Gastrocnemius medialis (tissue), 4 donors: ENCODE measurements at regions of chr3 and their contacts with region 1.

Region 1: DNA sequence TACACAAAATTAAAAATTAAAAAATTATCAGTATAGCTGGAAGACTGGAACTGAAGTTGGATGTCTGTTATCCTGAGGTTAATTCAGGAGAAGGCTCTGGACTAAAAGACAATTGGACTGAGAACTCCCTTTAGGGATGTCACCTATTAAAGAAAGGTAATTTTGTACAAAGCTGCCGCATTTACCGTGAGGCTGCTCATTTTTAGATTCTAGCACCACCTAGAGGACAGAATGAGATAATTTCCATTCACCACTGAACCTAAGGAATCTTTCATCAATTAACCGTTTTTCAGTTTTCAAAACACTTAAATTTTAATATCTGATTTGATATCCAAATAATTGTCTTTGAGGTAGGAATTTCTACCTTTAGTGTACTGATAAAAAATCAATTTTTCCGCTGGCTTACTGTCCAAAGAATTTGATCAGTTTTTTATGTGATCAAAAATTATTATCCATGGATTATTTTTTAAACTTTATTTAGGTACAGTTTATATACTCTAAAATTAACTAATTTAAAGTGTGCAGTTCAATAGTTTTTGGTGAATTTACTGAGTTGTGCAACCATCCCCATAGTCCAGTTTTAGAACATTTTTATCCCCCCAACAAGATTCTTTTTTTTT is 106.7 kb upstream of the TNIK start:
- DNase-seq: no peak
- ATAC-seq: peak; percentile 67 to 70
- H3K4me3 ChIP-seq: no peak overlapping the region
- H3K27ac ChIP-seq: no peak overlapping the region
- H3K4me1 ChIP-seq: peaks cover 10 to 18% of the 10 kb centered on the region in 2 donors
- H3K27me3 ChIP-seq: no peaks in the 10 kb centered on the region
- CTCF ChIP-seq: peak; percentile 62 to 81 (median 78)
- POLR2A ChIP-seq: no peak

Region 2: DNA sequence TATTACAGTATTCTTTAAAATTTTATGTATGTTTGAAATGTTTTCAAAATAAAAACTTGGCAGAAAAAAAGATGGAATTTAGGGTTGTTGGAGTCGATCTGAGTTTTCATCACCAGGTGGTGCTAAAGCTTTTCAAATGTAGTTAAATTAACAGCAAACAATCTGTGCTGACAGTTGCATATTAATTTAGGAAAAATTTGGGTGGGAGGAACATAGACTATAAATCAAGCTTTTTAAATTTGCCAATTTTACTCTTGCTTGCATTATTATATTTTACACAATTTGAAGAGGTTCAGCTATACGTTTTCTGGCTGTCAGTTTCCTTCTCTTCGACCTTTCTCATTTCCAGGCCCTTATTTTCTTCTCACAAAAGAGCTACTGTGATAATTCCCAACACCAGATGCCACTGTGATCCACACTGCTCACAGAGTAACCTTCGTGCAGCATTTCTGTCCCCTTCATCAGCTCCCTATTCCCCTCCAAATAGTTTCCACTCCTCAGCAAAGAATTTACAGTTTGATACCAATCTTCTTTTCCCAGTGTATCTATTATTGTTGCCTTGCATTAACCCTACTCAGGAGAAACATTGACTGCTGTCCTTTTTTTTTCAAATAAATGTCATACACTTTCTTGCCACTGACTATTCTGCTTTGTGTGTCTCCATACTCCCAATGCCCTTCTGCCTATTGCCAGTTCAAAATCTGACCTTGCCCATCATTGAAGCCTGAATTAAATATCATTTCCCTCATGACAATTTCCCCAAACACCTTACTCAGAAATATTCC is 605.1 kb before region 1 on chr3:
- in situ Hi-C with region 1: loop called (anchors 10 to 25 kb)
- intact Hi-C with region 1: loop called (anchors 5 kb)
- DNase-seq: no peak
- ATAC-seq: no peak
- H3K4me3 ChIP-seq: no peak overlapping the region
- H3K27ac ChIP-seq: no peak overlapping the region
- H3K4me1 ChIP-seq: no peaks in the 10 kb centered on the region
- H3K27me3 ChIP-seq: no peaks in the 10 kb centered on the region
- CTCF ChIP-seq: peak in 4 of 5 experiments; percentile 36 to 48 (median 43)
- POLR2A ChIP-seq: no peak

Region 3: DNA sequence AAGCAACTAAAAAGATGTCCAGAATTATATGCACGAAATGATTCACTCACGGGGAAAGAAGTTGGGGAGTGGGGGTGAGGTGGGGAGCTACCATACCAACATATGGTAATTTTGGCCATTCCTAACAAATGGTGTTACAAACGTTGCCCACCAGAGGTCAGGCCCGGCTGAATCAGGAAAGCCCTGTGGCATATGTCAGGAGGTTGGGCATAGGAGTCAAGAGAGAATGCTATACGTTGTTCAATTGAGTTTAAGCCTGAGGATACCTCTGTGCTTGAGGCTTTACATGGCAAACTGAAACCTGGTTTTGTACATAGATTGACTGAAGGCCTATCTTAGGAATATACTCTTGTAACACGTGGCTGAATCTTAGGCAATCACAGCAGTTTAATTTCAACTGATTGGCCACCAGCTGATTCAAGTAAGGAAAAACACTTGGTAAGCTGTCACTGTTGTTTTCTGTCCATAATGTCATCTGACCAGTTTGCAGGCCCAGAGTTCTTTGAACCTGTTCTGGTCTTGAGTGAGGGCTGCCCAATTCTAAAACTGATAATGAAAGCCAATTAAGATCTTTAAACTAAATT is 517.0 kb before region 1 on chr3:
- in situ Hi-C with region 1: loop called in 1 of 4 experiments (anchors 10 kb)
- intact Hi-C with region 1: loop called (anchors 2 kb)
- DNase-seq: no peak
- ATAC-seq: peak; percentile 56 to 58
- H3K4me3 ChIP-seq: no peak overlapping the region
- H3K27ac ChIP-seq: no peak overlapping the region
- H3K4me1 ChIP-seq: no peaks in the 10 kb centered on the region
- H3K27me3 ChIP-seq: no peaks in the 10 kb centered on the region
- CTCF ChIP-seq: peak in 4 of 5 experiments; percentile 29 to 58 (median 44)
- POLR2A ChIP-seq: no peak

Region 4: GRCh38 chr3:171162986-171163723 is 403.8 kb before region 1 on chr3:
- in situ Hi-C with region 1: loop called in 2 of 4 experiments (anchors 25 kb)
- intact Hi-C with region 1: no loop called
- DNase-seq: no peak
- ATAC-seq: no peak
- H3K4me3 ChIP-seq: no peak overlapping the region
- H3K27ac ChIP-seq: no peak overlapping the region
- H3K4me1 ChIP-seq: no peaks in the 10 kb centered on the region
- H3K27me3 ChIP-seq: no peaks in the 10 kb centered on the region
- CTCF ChIP-seq: peak in 3 of 5 experiments; percentile 32 to 48 (median 46)
- POLR2A ChIP-seq: no peak

Region 5: GRCh38 chr3:171187706-171188290 is 379.1 kb before region 1 on chr3:
- in situ Hi-C with region 1: loop called in 2 of 4 experiments (anchors 5 to 10 kb)
- intact Hi-C with region 1: loop called (anchors 2 kb)
- DNase-seq: no peak
- ATAC-seq: peak; percentile 82 to 88
- H3K4me3 ChIP-seq: no peak overlapping the region
- H3K27ac ChIP-seq: no peak overlapping the region
- H3K4me1 ChIP-seq: peaks cover 21 to 38% of the 10 kb centered on the region in 2 donors
- H3K27me3 ChIP-seq: no peaks in the 10 kb centered on the region
- CTCF ChIP-seq: peak; percentile 53 to 64 (median 63)
- POLR2A ChIP-seq: no peak

Region 6: DNA sequence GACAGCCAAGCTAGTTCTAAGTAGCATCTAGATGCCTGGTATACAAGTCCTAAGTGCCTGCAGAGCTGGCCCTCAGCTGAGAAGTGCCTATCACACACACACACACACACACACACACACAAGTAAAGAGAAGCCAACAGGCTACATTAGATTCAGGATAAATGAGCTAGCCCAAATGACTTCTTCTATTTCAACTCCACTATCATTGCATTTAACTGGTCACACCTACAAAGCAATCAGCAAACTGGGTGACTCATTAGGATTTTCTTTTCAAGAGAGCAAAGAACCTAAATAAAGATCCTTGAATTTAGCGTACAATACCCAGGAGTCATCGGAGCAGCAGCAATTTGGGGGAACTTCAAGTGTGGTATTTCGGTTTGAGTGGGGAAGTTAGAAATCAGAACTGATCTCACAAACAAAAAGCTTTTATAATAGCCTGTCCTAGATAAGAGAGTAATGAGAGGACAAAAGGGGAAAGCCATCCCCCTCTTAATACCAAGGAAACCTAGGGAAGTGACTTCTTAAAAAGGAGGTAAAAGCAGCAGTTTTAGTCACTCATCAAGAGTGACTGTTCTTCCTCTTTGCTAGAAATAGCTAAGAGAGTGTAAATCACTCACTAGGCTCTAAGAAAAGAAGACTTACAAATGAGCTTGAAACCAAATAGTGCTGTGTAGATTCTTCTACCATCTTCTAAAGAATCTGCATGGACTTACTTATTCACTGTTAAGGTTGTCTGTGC is 219.4 kb before region 1 on chr3:
- in situ Hi-C with region 1: no loop called
- intact Hi-C with region 1: loop called (anchors 10 kb)
- DNase-seq: no peak
- ATAC-seq: peak in 1 of 2 donors; percentile 15
- H3K4me3 ChIP-seq: no peak overlapping the region
- H3K27ac ChIP-seq: peak overlapping the region; percentile 16 to 40 (median 19)
- H3K4me1 ChIP-seq: peaks cover 47 to 51% of the 10 kb centered on the region in 2 donors
- H3K27me3 ChIP-seq: no peaks in the 10 kb centered on the region
- CTCF ChIP-seq: no peak
- POLR2A ChIP-seq: no peak

Region 7: GRCh38 chr3:171459942-171460724 is 106.8 kb before region 1 on chr3 and contains the start of gene TNIK:
- in situ Hi-C with region 1: loop called in 1 of 4 experiments (anchors 10 kb)
- intact Hi-C with region 1: no loop called
- DNase-seq: peak; percentile 94 to 95
- ATAC-seq: peak; percentile 83 to 85
- H3K4me3 ChIP-seq: peak within 1 kb of the TSS; percentile 68 to 88 (median 78)
- H3K27ac ChIP-seq: peak within 1 kb of the TSS; percentile 85 to 93 (median 92)
- H3K4me1 ChIP-seq: peaks cover 31 to 45% of the 10 kb centered on the region in 2 donors
- H3K27me3 ChIP-seq: no peaks in the 10 kb centered on the region
- CTCF ChIP-seq: peak in 1 of 5 experiments; percentile 42
- POLR2A ChIP-seq: peak; percentile 54 to 76
- total RNA-seq, gene TNIK: 5.2 to 19.7 (median 10.6) TPM